ENCODE measurements at regions of chr3 and their contacts with region 1.

Region 1: GRCh38 chr3:184135149-184135910 is at the start of gene EIF2B5:
- DNase-seq: peak; percentile 71 to 96
- H3K4me3 ChIP-seq: peak within 1 kb of the TSS; percentile 74 to 91
- H3K27ac ChIP-seq: peak within 1 kb of the TSS; percentile 90 to 91
- H3K4me1 ChIP-seq: peaks cover 3 to 9% of the 10 kb centered on the region in 2 donors
- H3K27me3 ChIP-seq: no peaks in the 10 kb centered on the region
- CTCF ChIP-seq: peak in 2 of 3 experiments; percentile 44 to 51
- total RNA-seq, gene EIF2B5: 24.7 TPM

Region 2: DNA sequence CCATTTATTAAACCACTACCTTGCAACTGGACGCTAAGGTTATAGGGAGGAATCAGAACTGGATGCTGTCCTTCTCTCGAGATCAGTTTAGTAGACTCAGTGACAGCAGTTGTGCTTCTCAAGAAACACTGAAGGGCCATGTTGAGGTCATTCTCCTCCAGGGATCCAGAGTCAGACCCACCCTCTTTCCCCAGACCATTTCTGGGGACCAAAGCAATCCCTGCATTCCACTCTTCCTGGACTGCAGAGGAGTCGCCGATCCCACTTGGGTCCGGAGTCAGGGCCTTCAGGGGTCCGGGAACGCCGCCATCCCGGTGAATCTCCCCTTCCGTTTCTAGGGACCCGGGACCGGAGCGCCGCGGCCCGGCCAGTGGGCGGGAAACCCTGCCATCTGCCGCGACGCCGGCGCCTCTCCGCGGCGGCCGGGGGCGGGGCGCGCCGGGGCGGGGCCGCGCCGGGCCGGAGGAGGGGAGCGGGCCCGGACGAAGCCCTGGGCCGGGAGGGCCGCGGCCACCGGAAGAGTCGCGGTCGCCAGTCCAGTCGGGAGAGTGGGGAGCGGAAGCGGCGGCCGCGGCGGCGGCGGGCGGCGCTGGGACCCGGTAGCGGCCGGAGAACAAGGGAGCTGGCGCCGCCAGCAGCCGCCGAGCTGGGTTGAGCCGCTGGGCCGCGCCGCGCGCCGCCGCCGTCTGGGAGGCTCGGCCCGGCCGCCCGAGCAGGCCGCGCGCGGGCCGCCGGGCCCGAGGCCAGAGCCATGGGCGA is 19.7 kb after region 1 on chr3 and contains the start of gene DVL3:
- intact Hi-C with region 1: loop called (anchors 1 kb)
- DNase-seq: peak in 1 of 2 donors; percentile 81
- H3K4me3 ChIP-seq: peak within 1 kb of the TSS; percentile 80 to 97
- H3K27ac ChIP-seq: peak within 1 kb of the TSS; percentile 87 to 89
- H3K4me1 ChIP-seq: peaks cover 9 to 21% of the 10 kb centered on the region in 2 donors
- H3K27me3 ChIP-seq: no peaks in the 10 kb centered on the region
- CTCF ChIP-seq: no peak
- total RNA-seq, gene DVL3: 36.6 TPM

Measured in ascending aorta (tissue), 2 donors.